ENCODE measurements at regions of chrX and their contacts with region 1.

Region 1: GRCh38 chrX:140057001-140057411 is 91.7 kb upstream of the CXorf66 start:
- DNase-seq: peak; percentile 83
- ATAC-seq: peak; percentile 96
- H3K4me3 ChIP-seq: no peak overlapping the region
- H3K27ac ChIP-seq: no peak overlapping the region
- H3K4me1 ChIP-seq: no peaks in the 10 kb centered on the region
- H3K27me3 ChIP-seq: peaks cover 8% of the 10 kb centered on the region; the same call in 1 of the 2 replicates
- CTCF ChIP-seq: peak; percentile 88

Region 2: GRCh38 chrX:140141444-140142029 is 84.5 kb after region 1 on chrX:
- CTCF ChIA-PET with region 1: no interaction called
- POLR2A ChIA-PET with region 1: no interaction called
- intact Hi-C with region 1: loop called (anchors 5 kb)
- DNase-seq: peak; percentile 54
- ATAC-seq: 0 out of 2 replicates have a peak, but pooled peaks have one; percentile 45
- H3K4me3 ChIP-seq: no peak overlapping the region
- H3K27ac ChIP-seq: no peak overlapping the region
- H3K4me1 ChIP-seq: no peaks in the 10 kb centered on the region
- H3K27me3 ChIP-seq: no peaks in the 10 kb centered on the region
- CTCF ChIP-seq: peak; percentile 61

Region 3: DNA sequence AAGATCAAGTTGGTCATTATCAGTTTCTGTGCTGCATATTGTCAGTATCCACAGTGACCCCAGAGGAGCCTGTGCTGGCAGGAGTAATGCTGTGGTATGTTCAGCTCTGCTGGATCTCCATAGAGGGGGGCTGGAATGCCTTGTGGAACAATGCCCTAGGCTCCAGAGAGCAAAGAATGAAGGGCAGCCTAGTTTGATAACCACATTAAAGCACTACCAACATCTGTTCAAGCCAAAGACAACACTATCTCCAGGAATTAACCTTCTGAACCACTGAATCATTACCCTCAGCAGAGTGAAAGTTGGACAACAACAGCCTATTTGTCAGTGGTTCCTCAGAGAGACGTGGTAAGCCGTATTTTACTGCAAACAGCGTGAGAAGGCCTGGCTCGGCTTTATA is 100.6 kb after region 1 on chrX:
- CTCF ChIA-PET with region 1: no interaction called
- POLR2A ChIA-PET with region 1: no interaction called
- intact Hi-C with region 1: no loop called
- DNase-seq: peak; percentile 2
- ATAC-seq: no peak
- H3K4me3 ChIP-seq: no peak overlapping the region
- H3K27ac ChIP-seq: no peak overlapping the region
- H3K4me1 ChIP-seq: no peaks in the 10 kb centered on the region
- H3K27me3 ChIP-seq: no peaks in the 10 kb centered on the region
- CTCF ChIP-seq: no peak

Region 4: GRCh38 chrX:140503714-140504351 is 446.8 kb after region 1 on chrX:
- CTCF ChIA-PET with region 1: interaction called, 8 read pairs
- POLR2A ChIA-PET with region 1: no interaction called
- intact Hi-C with region 1: loop called (anchors 10 kb)
- DNase-seq: no peak
- ATAC-seq: peak; percentile 34; the same call in 1 of the 2 replicates
- H3K4me3 ChIP-seq: no peak overlapping the region
- H3K27ac ChIP-seq: no peak overlapping the region
- H3K4me1 ChIP-seq: peaks cover 16% of the 10 kb centered on the region
- H3K27me3 ChIP-seq: peaks cover 88% of the 10 kb centered on the region
- CTCF ChIP-seq: no peak

Measured in PC-3 (cell line).